Pancreas (tissue), 10 donors: ENCODE measurements at regions of chr16 and their contacts with region 1.

Region 1: GRCh38 chr16:89711601-89712273 is 9.0 kb downstream of the VPS9D1 start:
- DNase-seq: peak in 4 of 6 donors; percentile 62 to 85 (median 74)
- ATAC-seq: peak; percentile 70 to 94 (median 83)
- H3K4me3 ChIP-seq: peak overlapping the region; percentile 21 to 49 (median 34)
- H3K27ac ChIP-seq: no peak overlapping the region
- H3K4me1 ChIP-seq: peaks cover 0 to 4% (median 0%) of the 10 kb centered on the region in 3 donors
- H3K27me3 ChIP-seq: no peaks in the 10 kb centered on the region
- CTCF ChIP-seq: no peak

Region 2: GRCh38 chr16:89473791-89474414 is 237.8 kb before region 1 on chr16:
- intact Hi-C with region 1: no loop called
- DNase-seq: peak in 1 of 6 donors; percentile 4
- ATAC-seq: peak in 2 of 4 donors; percentile 26 to 29
- H3K4me3 ChIP-seq: no peak overlapping the region
- H3K27ac ChIP-seq: no peak overlapping the region
- H3K4me1 ChIP-seq: peaks cover 3 to 53% (median 4%) of the 10 kb centered on the region in 3 donors
- H3K27me3 ChIP-seq: no peaks in the 10 kb centered on the region
- CTCF ChIP-seq: no peak

Region 3: DNA sequence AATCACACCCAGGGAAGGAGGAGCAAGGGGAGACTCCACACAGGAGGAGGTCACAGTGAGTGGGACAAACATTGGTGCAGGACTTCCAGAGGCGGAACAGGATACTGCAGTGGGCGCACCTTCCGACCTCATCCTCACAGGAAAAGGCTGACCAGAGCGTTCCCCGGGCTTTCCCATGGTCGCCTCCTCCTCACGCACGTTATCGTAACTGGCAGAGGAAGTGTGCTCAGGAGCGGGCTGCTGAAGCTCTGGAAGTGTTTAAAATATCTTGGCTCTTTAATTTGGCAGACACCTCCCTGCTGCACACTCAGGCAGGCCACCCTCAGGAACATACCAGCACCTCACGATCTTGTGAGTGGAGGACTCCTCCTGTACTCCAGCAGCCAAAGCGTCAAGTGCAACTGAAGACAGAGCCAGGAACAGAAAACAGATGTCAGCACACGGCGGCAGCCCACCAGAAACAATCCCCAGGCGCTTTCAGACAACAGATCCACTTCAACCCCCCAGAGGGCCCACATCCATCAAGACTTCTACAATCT is 87.2 kb after region 1 on chr16:
- intact Hi-C with region 1: loop called (anchors 5 to 10 kb)
- DNase-seq: no peak
- ATAC-seq: no peak
- H3K4me3 ChIP-seq: no peak overlapping the region
- H3K27ac ChIP-seq: no peak overlapping the region
- H3K4me1 ChIP-seq: no peaks in the 10 kb centered on the region
- H3K27me3 ChIP-seq: no peaks in the 10 kb centered on the region
- CTCF ChIP-seq: no peak